H1 (cell line): ENCODE measurements at regions of chr20 and their contacts with region 1.

Region 1: GRCh38 chr20:9225879-9226278 is 157.0 kb downstream of the PLCB4 start:
- DNase-seq: no peak
- H3K4me3 ChIP-seq: no peak overlapping the region
- H3K27ac ChIP-seq: no peak overlapping the region
- H3K4me1 ChIP-seq: peaks cover 3 to 6% (median 5%) of the 10 kb centered on the region in 4 experiments; a peak in 6 of 7 replicates
- H3K27me3 ChIP-seq: no peaks in the 10 kb centered on the region
- CTCF ChIP-seq: no peak
- EP300 ChIP-seq: no peak
- POLR2A ChIP-seq: no peak
- RAD21 ChIP-seq: no peak

Region 2: DNA sequence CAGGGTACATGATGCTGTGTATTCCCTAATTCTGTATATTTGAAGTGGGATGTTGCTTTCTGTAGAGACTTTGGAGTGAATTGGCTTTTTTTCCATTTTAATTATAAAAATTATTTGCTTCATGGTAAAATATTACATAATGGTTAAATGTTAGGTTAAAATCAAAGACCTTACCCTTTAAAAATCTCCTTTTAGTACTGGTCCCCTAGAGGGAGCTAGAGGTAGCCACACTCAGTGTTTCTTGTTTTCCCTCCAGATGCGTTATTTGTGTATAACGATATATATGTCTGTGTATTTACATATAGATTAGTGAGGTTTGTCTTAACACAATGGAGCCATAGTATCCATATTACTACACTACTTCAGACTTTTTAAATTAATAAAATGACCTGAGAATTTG is 10.3 kb before region 1 on chr20:
- CTCF ChIA-PET with region 1: interaction called, 14 read pairs
- POLR2A ChIA-PET with region 1: no interaction called
- DNase-seq: no peak
- H3K4me3 ChIP-seq: no peak overlapping the region
- H3K27ac ChIP-seq: no peak overlapping the region
- H3K4me1 ChIP-seq: no peaks in the 10 kb centered on the region
- H3K27me3 ChIP-seq: no peaks in the 10 kb centered on the region
- CTCF ChIP-seq: peak in 2 of 3 experiments; percentile 41 to 50; a peak in 2 of 4 replicates
- EP300 ChIP-seq: no peak
- POLR2A ChIP-seq: no peak
- RAD21 ChIP-seq: peak; percentile 49 to 50